Activated CD4-positive, alpha-beta memory T cell treated with anti-CD3 and anti-CD28 coated beads for 36 hours (primary cell): ENCODE measurements at regions of chrX and their contacts with region 1.

Region 1: GRCh38 chrX:150486011-150486410 is 82.4 kb upstream of the MTM1 start:
- DNase-seq: peak; percentile 52
- H3K4me3 Mint-ChIP-seq: no peak overlapping the region
- H3K27ac Mint-ChIP-seq: no peak overlapping the region
- H3K4me1 Mint-ChIP-seq: peaks cover 27% of the 10 kb centered on the region
- H3K27me3 Mint-ChIP-seq: no peaks in the 10 kb centered on the region

Region 2: GRCh38 chrX:150450519-150451177 is 35.4 kb before region 1 on chrX:
- CTCF ChIA-PET with region 1: interaction called, 9 read pairs
- POLR2A ChIA-PET with region 1: no interaction called
- intact Hi-C with region 1: loop called (anchors 1 kb)
- DNase-seq: peak; percentile 41
- H3K4me3 Mint-ChIP-seq: no peak overlapping the region
- H3K27ac Mint-ChIP-seq: no peak overlapping the region
- H3K4me1 Mint-ChIP-seq: peaks cover 15% of the 10 kb centered on the region
- H3K27me3 Mint-ChIP-seq: no peaks in the 10 kb centered on the region

Region 3: GRCh38 chrX:150731795-150732194 is 245.8 kb after region 1 on chrX:
- CTCF ChIA-PET with region 1: no interaction called
- POLR2A ChIA-PET with region 1: no interaction called
- intact Hi-C with region 1: loop called (anchors 5 kb)
- DNase-seq: peak; percentile 79
- H3K4me3 Mint-ChIP-seq: no peak overlapping the region
- H3K27ac Mint-ChIP-seq: peak overlapping the region; percentile 15
- H3K4me1 Mint-ChIP-seq: peaks cover 35% of the 10 kb centered on the region
- H3K27me3 Mint-ChIP-seq: no peaks in the 10 kb centered on the region